ENCODE measurements at regions of chr5 and their contacts with region 1.

Region 1: GRCh38 chr5:10627160-10627701 is 63.4 kb downstream of the ANKRD33B start:
- DNase-seq: no peak
- H3K4me3 ChIP-seq: peak overlapping the region; percentile 45
- CTCF ChIP-seq: no peak

Region 2: DNA sequence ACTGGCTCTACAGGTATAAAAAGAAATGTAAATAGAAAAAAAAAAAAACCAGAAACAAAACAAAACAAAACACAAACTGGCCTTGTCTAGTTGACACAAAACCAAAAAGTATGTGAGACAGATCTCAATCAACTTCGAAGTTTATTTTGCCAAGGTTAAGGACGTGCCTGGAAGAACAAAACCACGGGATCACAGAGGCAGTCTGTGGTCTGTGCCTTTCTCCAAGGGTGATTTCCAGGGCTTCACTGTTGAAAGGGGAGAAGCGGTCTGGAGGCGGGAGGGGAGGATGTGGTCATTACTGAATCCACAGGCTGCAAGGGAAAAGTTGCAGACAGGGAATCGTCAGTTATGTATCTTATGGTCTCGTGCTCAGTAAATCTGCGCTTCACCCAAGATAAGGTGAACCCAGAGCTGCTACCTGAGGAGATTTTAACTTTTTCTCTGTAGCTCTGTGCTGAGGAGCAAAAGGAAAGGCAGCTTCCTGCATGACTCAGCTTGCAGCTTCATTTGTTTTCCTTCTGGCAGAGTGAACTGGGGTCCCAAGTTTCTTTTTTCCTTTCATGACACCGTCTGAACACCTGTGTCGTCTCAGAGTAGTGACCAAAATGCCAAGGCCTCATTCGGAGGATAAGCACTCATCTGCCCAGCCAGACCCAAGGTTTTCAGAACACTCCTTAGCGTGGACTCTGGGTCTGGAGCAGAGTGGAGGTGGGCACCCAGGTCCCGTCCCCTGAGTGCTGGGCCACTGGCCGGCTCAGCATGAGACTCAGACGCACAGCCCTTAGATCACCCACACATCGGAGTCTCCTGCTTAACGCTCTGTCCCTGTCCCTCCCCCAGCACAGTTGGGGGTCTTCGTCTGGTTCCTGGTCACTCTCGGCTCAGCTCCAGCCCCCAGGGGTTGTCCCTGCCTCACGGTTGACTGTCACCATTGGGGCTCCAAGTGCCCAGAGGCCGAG is 159.7 kb before region 1 on chr5:
- CTCF ChIA-PET with region 1: interaction called, 256 read pairs
- POLR2A ChIA-PET with region 1: no interaction called
- DNase-seq: no peak
- H3K4me3 ChIP-seq: no peak overlapping the region
- CTCF ChIP-seq: no peak

Region 3: GRCh38 chr5:10592598-10592997 is 34.6 kb before region 1 on chr5:
- CTCF ChIA-PET with region 1: interaction called, 13 read pairs
- POLR2A ChIA-PET with region 1: no interaction called
- DNase-seq: no peak
- H3K4me3 ChIP-seq: no peak overlapping the region
- CTCF ChIP-seq: no peak

Region 4: DNA sequence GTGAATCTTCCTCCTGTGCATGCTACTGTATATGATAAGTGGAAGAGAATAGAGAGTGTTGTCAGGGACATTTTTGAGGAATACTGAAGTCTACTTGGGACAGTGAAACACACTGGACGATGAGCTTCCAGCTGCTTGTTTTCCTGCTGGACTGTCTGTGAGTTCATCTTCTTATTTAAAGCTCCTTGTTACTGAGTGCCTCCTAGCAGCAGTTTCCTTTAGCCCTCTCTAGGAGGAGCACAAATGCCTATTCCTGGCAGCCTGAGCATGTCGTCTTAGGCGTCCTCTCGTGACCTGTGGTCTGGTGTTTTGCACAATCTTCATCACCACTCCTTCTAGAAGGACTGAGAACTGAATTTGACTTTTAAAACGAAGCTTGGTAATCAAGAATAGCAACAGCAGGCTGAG is 19.6 kb before region 1 on chr5:
- CTCF ChIA-PET with region 1: interaction called, 65 read pairs
- POLR2A ChIA-PET with region 1: no interaction called
- DNase-seq: no peak
- H3K4me3 ChIP-seq: no peak overlapping the region
- CTCF ChIP-seq: no peak

Region 5: DNA sequence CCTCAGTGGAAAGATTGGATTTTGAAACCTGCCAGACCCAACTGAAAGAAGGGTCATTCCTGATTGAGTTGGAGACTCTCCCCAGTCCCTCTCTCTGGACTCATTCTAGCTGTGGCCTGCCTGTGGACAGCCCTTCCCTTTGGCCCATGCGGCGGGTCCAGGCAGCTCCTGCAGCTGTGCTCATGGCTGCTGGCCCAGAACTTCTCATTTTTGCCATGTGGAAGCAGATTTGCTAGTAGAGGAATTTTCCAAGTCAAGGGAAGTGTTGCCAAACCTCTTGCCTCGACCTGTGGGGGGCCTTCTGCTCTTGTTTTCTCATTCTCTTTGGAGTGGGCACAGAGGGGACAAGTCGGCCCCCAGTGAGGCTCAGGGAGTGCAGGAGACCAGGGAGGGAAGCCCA is 25.8 kb after region 1 on chr5:
- CTCF ChIA-PET with region 1: interaction called, 11 read pairs
- POLR2A ChIA-PET with region 1: no interaction called
- DNase-seq: no peak
- H3K4me3 ChIP-seq: no peak overlapping the region
- CTCF ChIP-seq: no peak

Region 6: DNA sequence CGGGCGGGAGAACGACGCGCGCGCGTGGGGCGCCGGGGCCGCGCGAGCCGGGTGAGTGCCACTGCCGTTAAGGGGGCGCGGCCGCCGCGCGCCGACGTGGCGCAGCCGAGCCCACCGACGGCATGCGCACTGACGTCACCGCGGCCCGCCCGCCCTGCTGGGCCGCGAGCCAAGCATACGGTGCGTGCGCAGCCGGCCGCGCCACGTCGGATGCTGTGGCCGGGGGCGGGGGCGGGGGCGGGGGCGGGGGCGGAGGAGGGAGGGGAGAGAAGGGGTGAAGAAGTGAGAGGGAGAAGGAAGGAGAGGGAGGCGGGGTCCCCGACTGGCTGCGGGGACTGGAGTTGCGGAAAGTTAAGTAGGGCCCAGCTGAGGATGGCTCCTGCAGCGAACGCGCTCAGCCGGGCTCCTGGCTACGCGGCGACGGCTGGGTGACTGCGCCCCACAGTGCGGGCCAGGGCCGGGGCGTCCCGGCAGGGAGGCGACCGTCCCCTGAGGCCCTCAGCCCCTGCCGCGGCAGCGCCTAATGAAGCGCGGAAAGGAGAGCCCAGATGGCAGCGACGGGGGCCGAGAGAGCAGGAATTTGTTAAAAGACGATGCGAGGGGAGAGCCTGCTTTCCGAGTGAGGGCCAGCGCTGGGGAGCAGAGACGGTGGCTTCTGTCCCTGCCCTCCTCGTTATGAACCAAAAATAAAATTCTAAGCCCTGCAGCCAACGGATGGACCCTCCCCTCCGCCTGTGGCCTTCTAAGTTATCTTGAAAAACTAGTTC is 134.1 kb after region 1 on chr5 and contains the start of gene DAP:
- CTCF ChIA-PET with region 1: no interaction called
- POLR2A ChIA-PET with region 1: no interaction called
- DNase-seq: no peak
- H3K4me3 ChIP-seq: peak within 1 kb of the TSS; percentile 67
- CTCF ChIP-seq: no peak